ENCODE measurements at regions of chr6 and their contacts with region 1.

Region 1: DNA sequence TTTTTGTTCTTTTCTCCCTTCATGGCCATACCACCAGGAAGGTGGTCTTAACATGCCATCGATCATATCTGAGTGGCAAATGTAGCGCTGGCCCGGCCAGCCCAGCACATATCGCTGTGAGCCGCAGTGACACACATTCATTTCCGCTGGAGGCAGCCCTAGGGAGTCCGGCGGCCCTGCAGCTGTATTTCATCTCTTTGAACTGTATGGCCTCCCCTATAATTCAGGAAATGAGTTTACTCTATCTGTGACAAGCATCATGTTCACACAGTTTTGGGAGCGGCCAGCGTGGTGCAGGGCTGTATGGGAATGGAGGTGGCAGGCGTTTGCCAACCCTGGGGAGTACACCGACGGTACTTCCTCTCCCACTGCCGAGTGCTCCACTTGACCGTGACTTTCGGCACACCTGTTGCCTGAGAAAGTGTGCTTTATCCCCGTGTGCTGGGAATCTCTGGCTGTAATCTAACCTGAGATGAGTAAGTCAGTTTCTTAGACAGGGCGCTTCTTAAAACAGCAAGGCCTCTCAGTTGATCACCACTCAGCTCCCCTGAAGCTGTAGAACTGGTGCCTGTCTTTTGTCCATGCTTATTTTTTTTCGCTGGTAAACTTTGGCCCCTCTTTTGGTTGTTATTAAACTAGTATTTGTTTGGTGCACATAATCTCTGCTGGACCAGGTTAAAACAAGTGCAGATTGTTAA is 257.1 kb upstream of the TAB2 start:
- DNase-seq: peak; percentile 76
- H3K4me3 Mint-ChIP-seq: peak overlapping the region; percentile 60
- H3K27ac Mint-ChIP-seq: peak overlapping the region; percentile 94
- H3K4me1 Mint-ChIP-seq: peaks cover 59% of the 10 kb centered on the region
- H3K27me3 Mint-ChIP-seq: no peaks in the 10 kb centered on the region

Region 2: DNA sequence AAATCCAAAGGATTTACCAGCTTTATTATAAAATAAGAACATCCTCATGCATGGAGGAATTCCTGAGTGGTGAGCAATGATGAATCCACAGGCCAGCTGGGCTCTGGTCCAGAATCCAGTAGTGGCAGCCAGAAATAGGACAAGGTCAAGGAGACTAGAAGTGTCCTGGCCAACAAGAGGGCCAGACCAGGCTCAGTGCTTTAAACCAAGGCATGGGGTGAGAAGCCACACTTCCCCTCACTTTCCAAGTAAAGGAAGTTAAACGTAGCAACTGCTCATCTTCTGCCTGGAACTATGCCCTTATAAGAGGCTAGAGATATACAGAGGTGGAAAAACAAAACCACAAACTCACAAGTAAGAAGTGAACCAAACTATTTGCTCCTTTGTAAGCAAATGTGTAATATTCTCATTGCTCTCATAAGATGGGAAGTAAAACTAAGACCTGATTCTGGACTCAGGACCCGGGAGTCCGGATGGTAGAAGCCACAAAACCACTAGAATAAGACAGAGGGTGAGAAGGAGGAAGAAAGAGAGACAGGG is 60.5 kb before region 1 on chr6:
- CTCF ChIA-PET with region 1: no interaction called
- DNase-seq: no peak
- H3K4me3 Mint-ChIP-seq: no peak overlapping the region
- H3K27ac Mint-ChIP-seq: no peak overlapping the region
- H3K4me1 Mint-ChIP-seq: peaks cover 18% of the 10 kb centered on the region
- H3K27me3 Mint-ChIP-seq: peaks cover 28% of the 10 kb centered on the region

Region 3: GRCh38 chr6:149075616-149076364 is 15.3 kb after region 1 on chr6:
- CTCF ChIA-PET with region 1: interaction called, 38 read pairs
- DNase-seq: no peak
- H3K4me3 Mint-ChIP-seq: no peak overlapping the region
- H3K27ac Mint-ChIP-seq: no peak overlapping the region
- H3K4me1 Mint-ChIP-seq: peaks cover 46% of the 10 kb centered on the region
- H3K27me3 Mint-ChIP-seq: no peaks in the 10 kb centered on the region

Region 4: GRCh38 chr6:149118737-149119653 is 58.5 kb after region 1 on chr6:
- CTCF ChIA-PET with region 1: no interaction called
- DNase-seq: no peak
- H3K4me3 Mint-ChIP-seq: no peak overlapping the region
- H3K27ac Mint-ChIP-seq: peak overlapping the region; percentile 54
- H3K4me1 Mint-ChIP-seq: peaks cover 75% of the 10 kb centered on the region
- H3K27me3 Mint-ChIP-seq: no peaks in the 10 kb centered on the region